ENCODE measurements at regions of chr13 and their contacts with region 1.

Region 1: DNA sequence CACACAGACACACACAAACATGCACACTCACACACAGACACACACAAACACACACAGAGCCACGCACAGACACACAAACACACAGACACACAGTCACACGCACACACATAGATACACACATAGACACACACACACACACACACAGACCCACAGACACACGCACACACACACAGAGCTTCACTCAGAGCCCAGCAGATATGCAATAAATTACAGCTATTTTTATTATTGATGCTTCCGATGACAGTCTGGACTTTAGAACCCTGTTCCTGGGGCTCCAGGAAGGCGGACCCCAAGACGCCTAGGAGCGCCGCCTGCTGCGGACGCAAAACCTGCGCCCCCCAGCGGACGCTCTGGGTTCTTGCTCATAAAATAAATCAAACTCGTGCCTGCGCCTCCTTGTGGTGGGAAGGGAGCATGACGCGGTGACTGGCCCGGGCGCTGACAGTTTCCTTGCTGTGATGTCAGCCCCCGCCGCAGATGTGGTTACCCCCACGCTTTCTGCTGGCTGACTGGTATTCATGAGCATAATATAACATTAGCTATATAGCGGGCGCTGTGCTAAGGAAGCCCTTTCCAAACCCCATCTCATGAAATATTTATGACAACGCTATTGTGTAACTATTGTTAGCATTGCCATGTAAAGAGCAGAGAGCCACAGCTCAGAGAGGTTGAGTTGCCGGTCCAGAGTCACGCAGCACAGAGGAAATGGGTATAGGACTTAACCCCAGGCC is 64.4 kb upstream of the TM9SF2 start:
- DNase-seq: peak; percentile 57 to 98 (median 82)

Region 2: GRCh38 chr13:99176309-99177276 is 260.3 kb before region 1 on chr13:
- intact Hi-C with region 1: loop called (anchors 1 kb)
- DNase-seq: peak; percentile 31 to 95 (median 74)

Region 3: GRCh38 chr13:99269627-99270241 is 167.1 kb before region 1 on chr13:
- intact Hi-C with region 1: loop called (anchors 1 kb)
- DNase-seq: no peak

Region 4: DNA sequence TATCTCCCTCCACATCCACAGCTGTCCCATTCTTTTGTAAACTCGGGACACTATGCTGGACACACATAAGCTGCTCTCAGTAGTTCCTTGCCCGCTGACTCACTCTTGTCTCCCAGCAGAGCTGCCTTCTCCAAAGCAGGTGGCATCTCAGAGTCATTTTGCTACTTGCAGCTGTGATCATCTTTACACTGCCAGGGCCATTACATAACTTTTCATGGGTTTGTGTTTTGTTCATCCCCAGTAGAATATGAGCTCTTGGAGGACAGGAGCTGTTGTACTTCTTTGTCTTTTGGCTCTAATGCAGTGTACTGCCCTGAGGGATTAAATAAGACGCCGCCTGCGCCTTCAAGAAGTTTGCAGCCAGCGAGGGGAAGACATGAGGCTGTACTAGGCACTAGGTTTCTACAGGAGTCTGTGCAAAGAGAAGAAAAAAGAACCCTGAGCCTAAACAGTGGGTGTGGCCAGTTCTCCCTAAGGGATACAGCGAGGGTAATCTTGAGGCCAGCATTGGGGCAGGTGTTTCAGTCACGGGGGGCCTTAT is 88.9 kb before region 1 on chr13:
- intact Hi-C with region 1: no loop called
- DNase-seq: peak in 7 of 10 donors; percentile 28 to 90 (median 54)

Region 5: GRCh38 chr13:99386911-99387788 is 49.7 kb before region 1 on chr13:
- intact Hi-C with region 1: loop called (anchors 10 kb)
- DNase-seq: no peak

Measured in posterior cingulate gyrus (tissue), 11 donors.